IMR-90 (cell line): ENCODE measurements at regions of chr11 and their contacts with region 1.

Region 1: GRCh38 chr11:12177739-12178338 is 67.4 kb downstream of the MICAL2 start:
- DNase-seq: peak; percentile 71
- ATAC-seq: no peak
- H3K4me3 ChIP-seq: no peak overlapping the region
- H3K27ac ChIP-seq: peak overlapping the region; percentile 93
- H3K4me1 ChIP-seq: peaks cover 29% of the 10 kb centered on the region
- H3K27me3 ChIP-seq: no peaks in the 10 kb centered on the region
- CTCF ChIP-seq: no peak
- POLR2A ChIP-seq: no peak
- RAD21 ChIP-seq: no peak

Region 2: DNA sequence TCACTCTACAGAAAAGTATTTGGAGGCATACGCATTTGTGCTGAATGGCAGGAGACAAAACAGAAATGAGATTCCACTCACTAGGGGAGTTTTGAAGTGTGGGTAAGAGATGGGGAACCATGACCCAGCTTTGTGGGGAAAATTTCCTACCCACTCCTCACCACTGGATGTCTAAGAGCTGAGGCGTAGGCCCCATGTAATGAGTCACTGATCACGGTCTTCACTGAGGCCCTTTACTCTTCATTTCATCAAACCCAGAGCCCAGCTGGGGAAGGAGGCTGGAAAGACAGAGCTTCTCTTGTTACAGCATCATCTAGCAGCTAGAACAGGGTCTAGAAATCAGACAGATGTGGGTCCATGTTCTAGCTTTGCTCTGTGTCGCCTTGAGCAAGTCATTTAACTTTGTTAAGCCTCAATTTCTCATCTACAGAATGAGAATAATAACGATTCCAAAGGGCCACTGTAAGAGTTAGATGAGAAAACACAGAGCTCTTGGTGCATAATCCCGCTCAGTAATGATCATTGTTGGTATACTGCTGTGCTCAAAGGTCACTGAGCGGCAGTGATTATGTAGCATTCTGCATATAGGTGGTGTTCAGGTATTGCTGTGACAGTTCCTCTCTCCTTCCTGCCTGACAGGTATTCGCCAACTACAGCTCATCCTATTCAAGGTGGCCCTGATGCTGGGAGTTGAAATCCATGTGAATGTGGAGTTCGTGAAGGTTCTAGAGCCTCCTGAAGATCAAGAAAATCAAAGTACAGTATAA is 29.7 kb after region 1 on chr11:
- CTCF ChIA-PET with region 1: interaction called, 10 read pairs
- POLR2A ChIA-PET with region 1: no interaction called
- dilution Hi-C with region 1: no loop called
- in situ Hi-C with region 1: no loop called
- intact Hi-C with region 1: no loop called
- DNase-seq: peak; percentile 86
- ATAC-seq: peak; percentile 36
- H3K4me3 ChIP-seq: no peak overlapping the region
- H3K27ac ChIP-seq: no peak overlapping the region
- H3K4me1 ChIP-seq: peaks cover 20% of the 10 kb centered on the region
- H3K27me3 ChIP-seq: no peaks in the 10 kb centered on the region
- CTCF ChIP-seq: 0 out of 2 replicates have a peak, but pooled peaks have one; percentile 5
- POLR2A ChIP-seq: peak; percentile 38; the same call in 1 of the 2 replicates
- RAD21 ChIP-seq: peak; percentile 25; the same call in 1 of the 2 replicates